Activated CD4-positive, alpha-beta T cell treated with anti-CD3 and anti-CD28 coated beads, Interleukin-2, amount 10 ng/mL, durations not matched to agents 7 days and 5 days (primary cell): ENCODE measurements at regions of chr16 and their contacts with region 1.

Region 1: DNA sequence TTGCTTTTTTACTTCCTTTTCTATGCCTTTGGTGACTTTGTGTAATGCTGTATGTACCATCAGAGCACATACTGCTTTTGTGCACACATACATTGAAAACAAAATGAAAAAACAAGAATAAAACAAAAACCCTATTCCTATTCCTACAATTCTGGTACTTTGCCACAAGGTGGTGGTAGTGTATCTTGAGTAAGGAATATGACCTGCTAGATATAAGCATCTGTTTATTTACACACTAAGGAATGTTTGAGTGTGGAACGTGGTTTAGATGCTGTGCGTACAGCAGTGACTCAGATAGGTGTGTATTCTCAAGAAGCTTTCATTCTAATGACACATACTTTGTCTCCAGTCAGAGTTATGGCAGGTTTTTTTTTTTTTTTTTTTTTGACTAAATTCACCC is 606.2 kb downstream of the WWOX start:
- DNase-seq: peak; percentile 13
- H3K4me3 Mint-ChIP-seq: no peak overlapping the region
- H3K27ac Mint-ChIP-seq: no peak overlapping the region
- H3K4me1 Mint-ChIP-seq: peaks cover 6% of the 10 kb centered on the region
- H3K27me3 Mint-ChIP-seq: no peaks in the 10 kb centered on the region

Region 2: DNA sequence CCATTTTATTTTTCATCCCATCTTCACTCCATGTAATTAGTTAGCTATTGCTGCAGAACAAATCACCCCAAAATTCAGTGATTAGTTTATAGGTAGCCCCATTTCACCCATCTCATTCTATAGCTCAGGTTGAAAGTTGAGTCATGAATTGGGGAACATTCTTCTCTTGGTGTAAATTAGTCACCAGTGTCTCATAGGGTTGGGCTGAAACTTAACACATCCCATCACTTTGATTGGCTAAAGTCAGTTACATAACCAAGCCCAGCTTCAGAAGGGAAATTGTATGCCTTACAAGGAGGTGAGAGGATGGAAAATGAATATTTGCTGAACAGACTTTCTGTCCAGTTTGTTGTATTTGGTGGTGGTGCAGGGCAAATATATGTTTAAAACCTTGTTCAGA is 128.8 kb before region 1 on chr16:
- CTCF ChIA-PET with region 1: no interaction called
- POLR2A ChIA-PET with region 1: no interaction called
- DNase-seq: no peak
- H3K4me3 Mint-ChIP-seq: no peak overlapping the region
- H3K27ac Mint-ChIP-seq: no peak overlapping the region
- H3K4me1 Mint-ChIP-seq: no peaks in the 10 kb centered on the region
- H3K27me3 Mint-ChIP-seq: no peaks in the 10 kb centered on the region

Region 3: GRCh38 chr16:78770353-78771091 is 64.8 kb after region 1 on chr16:
- CTCF ChIA-PET with region 1: interaction called, 18 read pairs
- POLR2A ChIA-PET with region 1: no interaction called
- DNase-seq: peak; percentile 69
- H3K4me3 Mint-ChIP-seq: no peak overlapping the region
- H3K27ac Mint-ChIP-seq: peak overlapping the region; percentile 9
- H3K4me1 Mint-ChIP-seq: peaks cover 31% of the 10 kb centered on the region
- H3K27me3 Mint-ChIP-seq: no peaks in the 10 kb centered on the region